ENCODE measurements at regions of chr13 and their contacts with region 1.

Region 1: DNA sequence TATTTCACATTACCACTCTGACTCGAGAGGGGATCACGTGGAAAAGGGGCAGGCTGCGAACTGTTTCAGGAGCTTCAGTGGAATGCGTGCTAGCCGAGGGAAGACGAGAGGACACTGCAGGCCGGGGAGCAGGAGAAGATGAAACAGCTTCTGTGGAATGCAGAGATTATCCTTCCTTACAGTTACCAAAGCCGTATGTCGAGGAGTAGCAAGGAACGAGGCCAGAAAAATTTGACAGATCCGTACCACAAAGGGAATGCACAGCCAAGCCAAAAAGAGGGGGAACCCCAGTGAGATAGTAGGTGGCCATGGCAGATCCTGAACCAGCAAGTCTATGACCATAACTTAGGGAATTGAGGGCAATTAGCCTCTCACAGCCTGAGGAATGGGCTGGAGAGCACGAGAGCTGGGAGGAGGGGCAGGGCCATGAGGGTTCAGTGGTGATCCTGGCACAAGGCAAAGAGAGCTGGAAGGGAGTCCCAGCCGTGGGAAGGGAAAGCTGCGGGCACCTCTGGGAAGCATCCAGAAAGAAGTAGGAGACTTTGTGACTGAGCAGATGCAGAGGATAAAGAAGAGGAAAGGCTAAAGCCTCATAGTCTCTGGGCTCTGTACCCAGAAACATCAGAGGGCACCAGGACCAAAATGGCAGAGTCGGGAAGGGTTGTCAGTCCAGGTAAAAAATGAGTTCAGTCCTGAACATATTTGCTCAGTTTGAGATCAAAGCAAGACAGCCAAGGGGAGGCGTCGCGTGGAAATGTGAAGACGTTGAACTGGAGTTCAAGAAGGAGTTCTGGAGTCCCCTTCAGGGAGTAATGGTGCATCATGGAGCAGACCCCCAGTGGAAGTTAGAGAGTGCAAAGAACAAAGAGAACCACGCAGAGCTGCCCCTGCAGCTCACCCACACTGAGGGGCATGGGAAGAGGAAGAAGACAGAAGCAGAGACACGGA is 5.1 kb downstream of the COL4A1 start:
- DNase-seq: peak; percentile 72
- H3K4me3 ChIP-seq: peak overlapping the region in 2 of 4 donors; percentile 2 to 20
- H3K27ac ChIP-seq: peak overlapping the region; percentile 98 to 100 (median 99)
- H3K4me1 ChIP-seq: peaks cover 0 to 82% (median 82%) of the 10 kb centered on the region in 4 donors
- H3K27me3 ChIP-seq: no peaks in the 10 kb centered on the region
- CTCF ChIP-seq: no peak
- EP300 ChIP-seq: no peak
- POLR2A ChIP-seq: no peak

Region 2: GRCh38 chr13:110250258-110250891 is 51.5 kb before region 1 on chr13:
- intact Hi-C with region 1: loop called (anchors 2 kb)
- DNase-seq: peak; percentile 84
- H3K4me3 ChIP-seq: no peak overlapping the region
- H3K27ac ChIP-seq: peak overlapping the region; percentile 80 to 97 (median 86)
- H3K4me1 ChIP-seq: peaks cover 0 to 82% (median 70%) of the 10 kb centered on the region in 4 donors
- H3K27me3 ChIP-seq: no peaks in the 10 kb centered on the region
- CTCF ChIP-seq: no peak
- EP300 ChIP-seq: peak in 1 of 4 donors; percentile 42
- POLR2A ChIP-seq: no peak

Region 3: GRCh38 chr13:111874981-111875380 is 1573.1 kb after region 1 on chr13:
- intact Hi-C with region 1: no loop called
- DNase-seq: no peak
- H3K4me3 ChIP-seq: no peak overlapping the region
- H3K27ac ChIP-seq: no peak overlapping the region
- H3K4me1 ChIP-seq: no peaks in the 10 kb centered on the region
- H3K27me3 ChIP-seq: peaks cover 0 to 21% (median 0%) of the 10 kb centered on the region in 3 donors
- CTCF ChIP-seq: no peak
- EP300 ChIP-seq: no peak
- POLR2A ChIP-seq: no peak